T-cell (primary cell): ENCODE measurements at regions of chr14 and their contacts with region 1.

Region 1: GRCh38 chr14:55051426-55052268 is at the start of gene MAPK1IP1L:
- DNase-seq: peak; percentile 76 to 94 (median 87)
- ATAC-seq: peak; percentile 88 to 99 (median 92)
- H3K4me3 ChIP-seq: peak within 1 kb of the TSS; percentile 97 to 100
- H3K4me3 Mint-ChIP-seq: peak within 1 kb of the TSS; percentile 87 to 90 (median 90)
- H3K27ac ChIP-seq: peak within 1 kb of the TSS; percentile 100
- H3K27ac Mint-ChIP-seq: peak within 1 kb of the TSS; percentile 89 to 91
- H3K4me1 ChIP-seq: peaks cover 15 to 34% of the 10 kb centered on the region in 2 experiments
- H3K4me1 Mint-ChIP-seq: peaks cover 44 to 52% (median 47%) of the 10 kb centered on the region in 3 donors
- H3K27me3 ChIP-seq: no peaks in the 10 kb centered on the region
- H3K27me3 Mint-ChIP-seq: no peaks in the 10 kb centered on the region
- total RNA-seq, gene MAPK1IP1L: 68.7 to 153 (median 73.4) TPM

Region 2: DNA sequence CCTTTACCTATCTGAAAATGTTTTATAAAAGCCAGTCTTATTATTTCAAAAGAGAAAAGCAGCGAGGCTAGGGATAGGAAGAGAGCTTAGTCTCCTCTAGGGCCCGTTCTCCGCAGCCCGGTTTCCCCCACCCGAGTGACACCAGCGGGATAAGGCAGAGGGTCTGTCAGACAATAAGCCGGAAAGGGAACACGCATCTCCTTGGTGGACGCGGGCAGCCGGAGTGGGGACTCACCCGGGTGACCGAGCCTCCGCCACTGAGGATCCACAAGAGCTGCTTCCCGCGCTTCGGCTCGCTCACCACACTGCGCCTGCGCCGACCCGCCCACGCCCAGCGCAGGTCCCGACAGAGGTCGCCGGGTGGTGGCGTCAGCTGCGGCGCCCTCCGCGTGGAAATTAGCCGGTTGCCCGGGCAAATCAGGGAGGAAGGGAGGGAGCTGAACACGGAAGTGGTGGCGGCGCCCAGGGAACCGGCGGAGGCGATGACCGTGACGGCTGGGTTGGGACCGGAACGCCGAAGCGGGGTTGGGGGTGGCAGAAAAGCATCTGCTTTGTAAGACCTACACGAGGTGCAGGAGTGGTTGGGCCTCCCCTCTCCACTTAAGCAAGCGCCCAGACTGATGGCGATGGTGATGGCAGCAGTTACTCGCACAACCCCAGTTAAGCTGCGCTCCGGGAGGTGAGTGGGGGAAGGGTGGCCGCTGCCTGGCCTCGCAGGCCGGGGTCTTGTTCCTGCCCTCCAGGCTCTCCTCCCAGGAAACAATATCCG is 24.7 kb before region 1 on chr14 and contains the starts of genes SOCS4 and WDHD1:
- CTCF ChIA-PET with region 1: interaction called, 4 to 15 read pairs
- POLR2A ChIA-PET with region 1: interaction called, 14 to 17 read pairs
- DNase-seq: peak; percentile 88 to 98 (median 93)
- ATAC-seq: peak; percentile 90 to 94 (median 94)
- H3K4me3 ChIP-seq: peak within 1 kb of the TSS; percentile 83 to 98
- H3K4me3 Mint-ChIP-seq: peak within 1 kb of the TSS; percentile 91 to 92 (median 91)
- H3K27ac ChIP-seq: peak within 1 kb of the TSS; percentile 86
- H3K27ac Mint-ChIP-seq: peak within 1 kb of the TSS; percentile 83 to 89
- H3K4me1 ChIP-seq: peaks cover 9 to 26% of the 10 kb centered on the region in 2 experiments
- H3K4me1 Mint-ChIP-seq: peaks cover 49 to 58% (median 53%) of the 10 kb centered on the region in 3 donors
- H3K27me3 ChIP-seq: no peaks in the 10 kb centered on the region
- H3K27me3 Mint-ChIP-seq: no peaks in the 10 kb centered on the region
- total RNA-seq, gene SOCS4: 16.7 to 26.4 (median 21.1) TPM
- total RNA-seq, gene WDHD1: 2.5 to 6.1 (median 4.9) TPM

Region 3: DNA sequence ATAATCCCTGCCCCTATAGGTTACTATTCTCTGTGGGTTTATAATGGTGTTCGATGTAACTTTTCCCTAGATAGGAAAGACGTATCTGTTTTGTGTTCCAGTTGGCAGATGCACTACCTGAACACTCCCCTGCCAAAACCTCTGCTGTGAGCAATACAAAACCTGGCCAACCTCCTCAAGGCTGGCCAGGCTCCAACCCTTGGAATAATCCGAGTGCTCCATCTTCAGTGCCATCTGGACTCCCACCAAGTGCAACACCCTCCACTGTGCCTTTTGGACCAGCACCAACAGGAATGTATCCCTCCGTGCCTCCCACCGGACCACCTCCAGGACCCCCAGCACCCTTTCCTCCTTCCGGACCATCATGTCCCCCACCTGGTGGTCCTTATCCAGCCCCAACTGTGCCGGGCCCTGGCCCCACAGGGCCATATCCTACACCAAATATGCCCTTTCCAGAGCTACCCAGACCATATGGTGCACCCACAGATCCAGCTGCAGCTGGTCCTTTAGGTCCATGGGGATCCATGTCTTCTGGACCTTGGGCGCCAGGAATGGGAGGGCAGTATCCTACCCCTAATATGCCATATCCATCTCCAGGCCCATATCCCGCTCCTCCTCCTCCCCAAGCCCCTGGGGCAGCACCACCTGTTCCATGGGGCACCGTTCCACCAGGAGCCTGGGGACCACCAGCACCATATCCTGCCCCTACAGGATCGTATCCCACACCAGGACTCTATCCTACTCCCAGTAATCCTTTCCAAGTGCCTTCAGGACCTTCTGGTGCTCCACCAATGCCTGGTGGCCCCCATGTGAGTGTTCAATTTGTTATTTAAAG is 11.1 kb after region 1 on chr14:
- CTCF ChIA-PET with region 1: interaction called in 1 of 2 experiments, 5 read pairs
- POLR2A ChIA-PET with region 1: interaction called, 5 to 10 read pairs
- DNase-seq: no peak
- ATAC-seq: peak in 1 of 4 experiments; percentile 21
- H3K4me3 ChIP-seq: no peak overlapping the region
- H3K4me3 Mint-ChIP-seq: no peak overlapping the region
- H3K27ac ChIP-seq: no peak overlapping the region
- H3K27ac Mint-ChIP-seq: peak overlapping the region in 1 of 2 donors; percentile 52
- H3K4me1 ChIP-seq: peaks cover 0 to 11% of the 10 kb centered on the region in 2 experiments
- H3K4me1 Mint-ChIP-seq: peaks cover 27 to 45% (median 42%) of the 10 kb centered on the region in 3 donors
- H3K27me3 ChIP-seq: no peaks in the 10 kb centered on the region
- H3K27me3 Mint-ChIP-seq: no peaks in the 10 kb centered on the region

Region 4: GRCh38 chr14:55071870-55072640 is 20.4 kb after region 1 on chr14:
- CTCF ChIA-PET with region 1: interaction called, 3 to 10 read pairs
- POLR2A ChIA-PET with region 1: interaction called, 12 to 14 read pairs
- DNase-seq: peak in 4 of 35 experiments; percentile 9 to 54 (median 12)
- ATAC-seq: peak; percentile 56 to 74 (median 68)
- H3K4me3 ChIP-seq: no peak overlapping the region
- H3K4me3 Mint-ChIP-seq: peak overlapping the region; percentile 53 to 63 (median 59)
- H3K27ac ChIP-seq: peak overlapping the region; percentile 64
- H3K27ac Mint-ChIP-seq: peak overlapping the region; percentile 89 to 93
- H3K4me1 ChIP-seq: peaks cover 6 to 15% of the 10 kb centered on the region in 2 experiments
- H3K4me1 Mint-ChIP-seq: peaks cover 42 to 43% (median 43%) of the 10 kb centered on the region in 3 donors
- H3K27me3 ChIP-seq: no peaks in the 10 kb centered on the region
- H3K27me3 Mint-ChIP-seq: no peaks in the 10 kb centered on the region